AG04450 (cell line): ENCODE measurements at regions of chr12 and their contacts with region 1.

Region 1: GRCh38 chr12:100733817-100734593 is 60.6 kb upstream of the ANO4 start:
- DNase-seq: peak; percentile 10
- H3K4me3 ChIP-seq: no peak overlapping the region
- H3K27ac ChIP-seq: no peak overlapping the region
- H3K27me3 ChIP-seq: no peaks in the 10 kb centered on the region
- CTCF ChIP-seq: peak; percentile 70

Region 2: GRCh38 chr12:100348657-100349454 is 385.1 kb before region 1 on chr12:
- CTCF ChIA-PET with region 1: interaction called, 27 read pairs
- POLR2A ChIA-PET with region 1: interaction called, 4 read pairs
- DNase-seq: no peak
- H3K4me3 ChIP-seq: no peak overlapping the region
- H3K27ac ChIP-seq: no peak overlapping the region
- H3K27me3 ChIP-seq: peaks cover 3% of the 10 kb centered on the region
- CTCF ChIP-seq: peak; percentile 48